GM18951 (cell line): ENCODE measurements at regions of chr1 and their contacts with region 1.

Region 1: DNA sequence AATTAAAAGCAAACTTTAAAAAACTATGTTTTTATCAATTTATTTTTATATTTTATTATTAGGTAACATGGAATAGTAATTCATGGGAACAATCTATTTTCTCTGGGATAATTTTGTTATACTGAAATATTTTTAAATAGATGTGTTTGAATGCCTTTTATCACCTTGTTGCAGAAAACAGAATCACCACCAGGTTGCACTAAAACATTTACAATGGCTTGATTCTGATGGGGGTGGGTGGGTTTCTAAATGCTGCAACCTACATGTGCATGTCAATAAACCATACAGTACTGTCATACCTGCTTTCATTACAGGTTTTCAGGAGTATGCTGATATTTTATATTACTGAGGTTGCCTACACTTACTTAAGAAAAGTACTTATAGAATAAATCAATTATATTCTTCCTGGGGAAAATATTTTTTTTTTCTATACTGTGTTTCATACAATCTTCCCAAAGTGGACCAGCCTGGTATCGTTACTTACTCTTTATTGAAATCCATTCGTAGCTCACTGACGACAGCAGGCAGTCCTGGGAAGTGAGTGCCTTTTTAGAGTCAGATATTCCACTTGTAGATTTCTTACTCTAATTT is 132.8 kb downstream of the PTPRC start:
- POLR2A ChIP-seq: no peak

Region 2: GRCh38 chr1:198363625-198364151 is 408.0 kb before region 1 on chr1:
- in situ Hi-C with region 1: no loop called
- POLR2A ChIP-seq: no peak

Region 3: GRCh38 chr1:199243423-199244061 is 471.9 kb after region 1 on chr1:
- in situ Hi-C with region 1: loop called (anchors 25 kb)
- POLR2A ChIP-seq: no peak

Region 4: GRCh38 chr1:199463521-199464128 is 692.0 kb after region 1 on chr1:
- in situ Hi-C with region 1: loop called (anchors 25 kb)
- POLR2A ChIP-seq: no peak

Region 5: DNA sequence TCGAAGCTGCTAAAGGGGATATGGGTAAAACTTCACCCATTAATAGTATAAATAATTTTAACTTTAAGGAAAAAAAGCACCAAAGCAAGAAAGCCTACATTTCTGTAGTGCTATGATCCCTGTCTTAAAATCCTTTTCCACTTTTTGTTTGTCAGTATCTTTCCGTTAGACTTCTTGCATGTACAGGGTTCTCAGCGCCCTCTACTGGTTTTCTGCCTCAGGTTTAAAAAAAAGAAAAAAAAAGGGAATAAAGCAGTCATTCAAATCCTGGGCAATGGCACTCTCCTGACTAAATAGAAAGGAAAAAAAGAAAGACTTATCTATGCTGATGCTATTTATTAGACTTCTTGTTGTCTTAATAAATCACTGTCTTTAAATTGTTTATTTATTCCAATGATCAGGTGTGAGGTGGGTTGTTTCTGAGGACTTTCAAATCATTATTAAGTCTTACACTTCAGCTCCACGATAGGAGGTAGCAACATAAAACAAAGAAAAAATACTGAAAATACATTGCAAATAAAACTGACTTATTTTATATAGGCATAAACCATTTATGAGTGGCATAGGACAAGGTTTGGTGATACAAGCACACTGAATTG is 780.4 kb after region 1 on chr1:
- in situ Hi-C with region 1: loop called (anchors 25 kb)
- POLR2A ChIP-seq: no peak